ENCODE measurements at regions of chr9 and their contacts with region 1.

Region 1: DNA sequence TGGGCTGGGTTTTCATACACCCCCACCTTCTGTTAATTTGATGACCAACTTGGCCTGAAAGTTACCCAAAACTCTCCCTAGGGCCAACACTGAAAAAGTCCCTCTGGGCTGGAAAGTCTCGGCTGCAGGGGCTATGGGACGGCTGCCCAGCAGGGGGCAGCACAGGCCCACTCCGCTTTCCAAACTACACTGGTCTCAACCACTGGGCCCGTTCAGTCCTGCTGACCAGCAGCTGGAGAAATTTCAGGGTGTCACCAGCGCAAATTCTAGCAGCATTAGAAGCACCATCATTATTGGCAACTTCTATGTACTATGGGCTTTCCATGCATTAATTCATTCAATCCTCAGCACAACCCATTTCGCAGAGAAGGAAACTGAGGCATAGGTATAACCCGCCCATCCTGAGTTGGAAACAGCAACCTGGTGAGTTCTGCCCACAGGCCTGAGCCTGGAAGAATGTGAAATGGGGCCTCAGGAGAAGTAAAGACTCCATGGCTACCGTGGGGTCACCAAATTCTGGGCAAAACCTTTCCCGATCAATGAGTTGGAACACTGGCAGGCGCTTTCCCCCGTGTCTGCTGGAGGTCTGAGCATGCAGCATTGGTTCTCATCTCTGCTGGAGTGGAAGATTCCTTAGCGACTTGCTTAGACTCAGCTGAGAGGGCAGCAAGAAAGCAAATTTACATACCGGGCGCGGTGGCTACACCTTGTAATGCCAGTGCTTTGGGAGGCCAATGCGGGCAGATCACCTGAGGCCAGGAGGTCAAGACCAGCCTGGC is 9.7 kb downstream of the ORM2 start:
- DNase-seq: peak; percentile 46
- ATAC-seq: peak; percentile 96
- H3K4me3 ChIP-seq: no peak overlapping the region
- H3K27ac ChIP-seq: no peak overlapping the region
- H3K4me1 ChIP-seq: peaks cover 6% of the 10 kb centered on the region; the same call in 1 of the 2 replicates
- H3K27me3 ChIP-seq: no peaks in the 10 kb centered on the region
- CTCF ChIP-seq: peak; percentile 89 to 96 (median 90); a peak in 5 of 6 replicates
- EP300 ChIP-seq: 0 out of 4 replicates have a peak, but pooled peaks of 1 of the 2 experiments have one; percentile 35
- POLR2A ChIP-seq: no peak; the same call in 1 of the 2 replicates
- RAD21 ChIP-seq: peak; percentile 75

Region 2: GRCh38 chr9:114072184-114073140 is 266.9 kb before region 1 on chr9:
- CTCF ChIA-PET with region 1: no interaction called
- POLR2A ChIA-PET with region 1: no interaction called
- RAD21 ChIA-PET with region 1: no interaction called
- SMC1A ChIA-PET with region 1: no interaction called
- in situ Hi-C with region 1: no loop called
- intact Hi-C with region 1: no loop called
- DNase-seq: no peak
- ATAC-seq: no peak
- H3K4me3 ChIP-seq: no peak overlapping the region
- H3K27ac ChIP-seq: no peak overlapping the region
- H3K4me1 ChIP-seq: no peaks in the 10 kb centered on the region
- H3K27me3 ChIP-seq: no peaks in the 10 kb centered on the region; a peak in 1 of 4 replicates
- CTCF ChIP-seq: no peak
- EP300 ChIP-seq: no peak
- POLR2A ChIP-seq: no peak
- RAD21 ChIP-seq: no peak

Region 3: DNA sequence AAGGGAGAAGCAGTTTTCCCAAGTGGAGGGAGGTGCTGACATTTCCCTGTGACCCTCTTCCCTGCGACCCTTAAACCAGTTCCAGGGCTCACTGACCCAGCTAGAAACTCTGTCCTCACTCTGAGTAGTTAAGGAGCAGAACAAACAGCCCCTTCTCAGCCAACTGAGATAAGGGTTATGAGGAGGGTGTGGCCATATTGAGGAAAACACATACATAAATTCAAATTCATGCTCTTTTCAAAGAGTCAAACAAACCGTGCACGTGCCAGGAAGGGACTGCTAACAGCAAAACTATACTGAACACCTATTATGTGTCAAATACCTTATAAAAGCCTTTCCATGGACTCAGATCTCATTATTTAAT is 53.4 kb after region 1 on chr9:
- CTCF ChIA-PET with region 1: interaction called, 122 read pairs
- POLR2A ChIA-PET with region 1: interaction called, 11 read pairs
- RAD21 ChIA-PET with region 1: interaction called, 52 read pairs
- SMC1A ChIA-PET with region 1: interaction called, 50 read pairs
- in situ Hi-C with region 1: no loop called
- intact Hi-C with region 1: loop called (anchors 1 kb)
- DNase-seq: no peak
- ATAC-seq: no peak
- H3K4me3 ChIP-seq: no peak overlapping the region
- H3K27ac ChIP-seq: 0 out of 2 replicates have a peak overlapping the region, but pooled peaks have one; percentile 34
- H3K4me1 ChIP-seq: peaks cover 71% of the 10 kb centered on the region
- H3K27me3 ChIP-seq: no peaks in the 10 kb centered on the region
- CTCF ChIP-seq: no peak
- EP300 ChIP-seq: no peak
- POLR2A ChIP-seq: no peak
- RAD21 ChIP-seq: no peak

Region 4: DNA sequence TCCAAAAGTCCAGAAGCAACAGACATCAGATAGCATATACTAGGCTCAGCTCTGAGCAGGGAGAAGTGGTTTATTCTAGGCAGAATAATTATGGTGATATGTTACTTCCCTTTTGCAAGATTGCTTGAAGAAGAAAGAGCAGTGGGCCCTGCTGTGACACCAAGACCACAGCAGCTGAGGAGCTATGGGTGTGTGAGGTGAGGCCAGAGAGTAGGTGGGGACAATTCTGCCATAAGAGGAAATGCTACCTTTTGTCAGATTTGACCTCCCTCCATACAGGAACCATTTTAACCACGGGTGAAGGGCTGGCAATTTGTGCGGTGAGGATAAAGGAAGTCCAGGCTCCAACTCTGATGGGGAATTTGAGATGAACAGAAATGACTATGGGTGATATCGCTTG is 415.3 kb after region 1 on chr9:
- CTCF ChIA-PET with region 1: no interaction called
- POLR2A ChIA-PET with region 1: no interaction called
- RAD21 ChIA-PET with region 1: no interaction called
- SMC1A ChIA-PET with region 1: no interaction called
- in situ Hi-C with region 1: no loop called
- intact Hi-C with region 1: no loop called
- DNase-seq: no peak
- ATAC-seq: no peak
- H3K4me3 ChIP-seq: no peak overlapping the region
- H3K27ac ChIP-seq: no peak overlapping the region
- H3K4me1 ChIP-seq: no peaks in the 10 kb centered on the region
- H3K27me3 ChIP-seq: no peaks in the 10 kb centered on the region; a peak in 1 of 4 replicates
- CTCF ChIP-seq: no peak
- EP300 ChIP-seq: no peak
- POLR2A ChIP-seq: no peak
- RAD21 ChIP-seq: no peak